GM12878 (cell line): ENCODE measurements at regions of chrX and their contacts with region 1.

Region 1: DNA sequence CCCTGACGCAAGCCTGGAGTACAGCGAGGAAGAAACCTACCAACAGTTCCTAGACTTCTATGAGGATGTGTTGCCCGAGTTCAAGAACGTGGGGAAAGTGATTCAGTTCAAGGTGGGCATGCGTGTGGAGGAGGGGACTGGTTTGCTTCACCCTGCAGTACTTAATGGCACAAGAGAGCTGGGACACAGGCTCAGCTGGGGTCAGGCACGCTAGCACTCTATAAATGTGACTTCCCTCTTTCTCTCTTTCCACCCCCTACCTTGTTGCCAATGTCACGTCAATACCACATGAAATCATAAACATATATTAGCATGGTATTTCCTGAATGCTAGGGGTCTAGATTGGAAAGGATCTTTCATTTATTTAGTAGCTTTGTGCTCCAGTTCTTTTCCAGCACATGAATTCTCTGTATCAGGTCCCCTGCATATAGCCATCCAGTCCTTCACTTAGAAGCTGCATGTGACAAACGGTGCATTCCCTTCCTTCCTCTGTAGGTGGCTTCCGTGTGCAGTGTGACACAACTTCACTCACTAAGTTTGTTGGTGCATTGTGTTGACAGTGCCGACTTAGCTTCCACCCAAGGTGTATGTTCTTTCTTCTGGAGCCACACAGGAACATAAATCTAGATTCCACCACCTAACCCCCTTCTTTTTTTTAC is 25.6 kb downstream of the ZRSR2 start:
- DNase-seq: peak; percentile 8
- ATAC-seq: peak; percentile 96
- H3K4me3 ChIP-seq: no peak overlapping the region
- H3K27ac ChIP-seq: no peak overlapping the region
- H3K4me1 ChIP-seq: peaks cover 6% of the 10 kb centered on the region; the same call in 1 of the 2 replicates
- H3K27me3 ChIP-seq: no peaks in the 10 kb centered on the region
- CTCF ChIP-seq: peak; percentile 45 to 51 (median 49); a peak in 5 of 6 replicates
- EP300 ChIP-seq: no peak
- POLR2A ChIP-seq: no peak
- RAD21 ChIP-seq: peak; percentile 40; the same call in 1 of the 2 replicates

Region 2: DNA sequence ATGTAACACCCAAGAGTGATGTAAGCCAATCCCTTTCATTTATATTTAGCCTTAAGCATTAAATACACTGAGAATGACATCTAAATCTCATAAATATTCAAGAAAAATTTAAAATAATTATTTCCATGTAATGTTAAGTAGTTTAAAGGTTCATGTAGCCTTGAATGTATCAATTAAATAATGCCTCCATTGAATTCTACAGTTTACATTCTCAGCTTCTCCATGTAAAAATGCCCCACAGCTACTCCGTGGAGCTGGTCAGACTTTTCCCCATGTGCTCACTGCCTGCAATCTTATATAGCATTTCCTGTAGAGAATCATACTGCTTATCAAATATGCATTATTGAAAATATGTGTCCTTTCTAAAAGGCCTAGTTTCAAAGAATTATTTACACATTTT is 13.3 kb after region 1 on chrX:
- CTCF ChIA-PET with region 1: interaction called, 10 read pairs
- POLR2A ChIA-PET with region 1: no interaction called
- RAD21 ChIA-PET with region 1: no interaction called
- SMC1A ChIA-PET with region 1: interaction called, 3 read pairs
- in situ Hi-C with region 1: no loop called
- intact Hi-C with region 1: no loop called
- DNase-seq: no peak
- ATAC-seq: no peak
- H3K4me3 ChIP-seq: no peak overlapping the region
- H3K27ac ChIP-seq: no peak overlapping the region
- H3K4me1 ChIP-seq: no peaks in the 10 kb centered on the region
- H3K27me3 ChIP-seq: no peaks in the 10 kb centered on the region
- CTCF ChIP-seq: no peak
- EP300 ChIP-seq: no peak
- POLR2A ChIP-seq: no peak
- RAD21 ChIP-seq: no peak

Region 3: DNA sequence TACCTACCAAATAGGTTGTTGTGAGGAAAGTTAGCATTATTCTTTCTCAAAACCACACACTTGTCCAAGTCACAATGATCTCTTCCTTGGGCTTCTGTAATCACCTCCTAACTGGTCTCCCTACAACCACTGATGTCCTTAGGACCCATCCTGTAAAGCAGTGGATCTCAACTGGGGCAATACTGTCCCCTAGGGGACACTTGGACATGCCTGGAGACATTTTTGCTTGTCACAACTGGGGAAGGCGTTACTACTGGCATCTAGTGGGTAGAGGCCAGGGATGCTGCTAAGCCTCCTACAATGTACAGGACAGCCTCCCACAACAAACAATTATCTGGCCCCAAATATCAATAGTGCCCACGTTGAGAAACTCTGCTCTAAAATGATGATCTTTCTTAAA is 157.4 kb after region 1 on chrX:
- CTCF ChIA-PET with region 1: interaction called, 13 read pairs
- POLR2A ChIA-PET with region 1: no interaction called
- RAD21 ChIA-PET with region 1: interaction called, 7 read pairs
- SMC1A ChIA-PET with region 1: interaction called, 12 read pairs
- in situ Hi-C with region 1: no loop called
- intact Hi-C with region 1: loop called (anchors 1 kb)
- DNase-seq: peak; percentile 26
- ATAC-seq: peak; percentile 98
- H3K4me3 ChIP-seq: no peak overlapping the region
- H3K27ac ChIP-seq: no peak overlapping the region
- H3K4me1 ChIP-seq: no peaks in the 10 kb centered on the region; the same call in 1 of the 2 replicates
- H3K27me3 ChIP-seq: no peaks in the 10 kb centered on the region
- CTCF ChIP-seq: peak; percentile 71 to 81 (median 79)
- EP300 ChIP-seq: no peak
- POLR2A ChIP-seq: no peak
- RAD21 ChIP-seq: peak; percentile 86